ENCODE measurements at regions of chr19 and their contacts with region 1.

Region 1: DNA sequence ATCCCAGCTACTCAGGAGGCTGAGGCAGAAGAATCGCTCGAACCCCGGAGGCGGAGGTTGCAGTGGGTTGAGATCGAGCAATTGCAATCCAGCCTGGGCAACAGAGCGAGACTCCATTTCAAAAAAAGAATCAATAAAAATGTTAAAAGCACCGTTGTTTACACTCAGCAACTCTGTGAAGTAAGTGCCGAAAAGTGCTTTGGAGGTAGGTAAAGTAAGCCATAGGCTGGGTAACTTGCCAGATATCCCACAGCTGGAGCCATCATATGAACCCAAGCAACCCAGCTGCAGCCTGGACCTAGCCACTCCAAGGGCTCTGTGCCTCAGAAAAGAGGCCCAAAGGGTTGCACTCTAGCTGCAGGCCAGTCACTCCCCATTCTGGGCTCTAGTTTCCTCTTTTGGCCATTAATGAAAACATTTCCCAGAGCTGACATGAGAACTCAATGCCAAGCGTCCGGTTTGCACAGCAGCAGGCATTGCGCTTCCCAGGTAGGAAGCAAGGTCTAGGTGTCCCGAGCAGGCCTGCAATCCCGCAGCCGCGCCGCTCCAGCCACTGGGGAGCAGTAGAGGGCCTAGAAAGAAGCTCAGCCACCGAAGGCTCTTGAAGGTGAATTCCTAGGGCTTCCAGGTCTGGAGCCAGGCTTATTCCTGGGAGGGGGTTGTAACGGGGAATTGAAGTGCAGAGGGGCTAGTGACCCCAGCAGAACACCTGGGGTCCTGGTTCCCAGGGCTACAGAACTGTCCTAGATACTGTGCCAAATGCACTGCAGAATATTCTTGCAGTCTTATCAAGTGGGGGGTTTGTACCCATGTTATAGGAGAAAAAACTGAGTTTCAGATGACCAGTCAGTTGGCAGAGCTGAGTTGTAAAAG is 4.1 kb upstream of the CD79A start:
- DNase-seq: peak; percentile 52 to 82 (median 82)
- ATAC-seq: peak; percentile 42 to 53
- H3K4me3 ChIP-seq: no peak overlapping the region
- H3K27ac ChIP-seq: no peak overlapping the region
- H3K4me1 ChIP-seq: peaks cover 3% of the 10 kb centered on the region
- H3K27me3 ChIP-seq: no peaks in the 10 kb centered on the region

Region 2: GRCh38 chr19:41934849-41935374 is 61.9 kb after region 1 on chr19:
- intact Hi-C with region 1: loop called in 1 of 4 experiments (anchors 5 kb)
- DNase-seq: peak; percentile 59 to 81 (median 78)
- ATAC-seq: peak; percentile 57 to 63
- H3K4me3 ChIP-seq: no peak overlapping the region
- H3K27ac ChIP-seq: no peak overlapping the region
- H3K4me1 ChIP-seq: no peaks in the 10 kb centered on the region
- H3K27me3 ChIP-seq: no peaks in the 10 kb centered on the region

Region 3: DNA sequence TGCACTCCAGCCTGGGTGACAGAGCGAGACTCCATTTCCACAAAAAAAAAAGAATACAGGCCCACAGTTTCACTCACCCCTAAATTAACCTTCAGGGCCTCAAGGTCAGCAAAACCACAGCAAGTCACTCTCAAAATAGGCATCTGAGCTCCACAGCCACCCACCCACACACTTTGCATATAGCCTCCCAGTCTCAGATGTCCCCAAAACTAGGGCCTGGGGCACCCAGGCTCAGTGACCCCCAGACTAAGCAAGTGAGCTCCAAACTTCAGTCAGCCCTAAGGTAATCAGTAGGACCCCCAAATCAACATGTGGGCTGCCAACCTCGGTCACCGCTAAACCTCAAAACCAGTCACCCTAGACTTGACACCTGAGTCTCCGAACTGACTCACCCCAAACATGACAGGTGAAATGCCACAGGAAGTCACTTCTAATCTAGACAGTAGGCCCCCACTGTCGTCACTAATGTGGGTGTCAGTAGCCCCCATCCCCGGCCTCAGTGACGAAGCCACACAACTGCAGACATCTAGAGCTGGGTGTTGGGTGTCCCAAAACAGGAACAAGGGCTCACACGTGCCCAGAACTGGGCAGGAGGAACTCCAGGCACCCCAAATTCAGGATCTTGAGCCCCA is 72.2 kb after region 1 on chr19:
- intact Hi-C with region 1: loop called in 3 of 4 experiments (anchors 5 kb)
- DNase-seq: peak in 2 of 3 donors; percentile 23 to 61
- ATAC-seq: no peak
- H3K4me3 ChIP-seq: no peak overlapping the region
- H3K27ac ChIP-seq: no peak overlapping the region
- H3K4me1 ChIP-seq: no peaks in the 10 kb centered on the region
- H3K27me3 ChIP-seq: no peaks in the 10 kb centered on the region

Region 4: DNA sequence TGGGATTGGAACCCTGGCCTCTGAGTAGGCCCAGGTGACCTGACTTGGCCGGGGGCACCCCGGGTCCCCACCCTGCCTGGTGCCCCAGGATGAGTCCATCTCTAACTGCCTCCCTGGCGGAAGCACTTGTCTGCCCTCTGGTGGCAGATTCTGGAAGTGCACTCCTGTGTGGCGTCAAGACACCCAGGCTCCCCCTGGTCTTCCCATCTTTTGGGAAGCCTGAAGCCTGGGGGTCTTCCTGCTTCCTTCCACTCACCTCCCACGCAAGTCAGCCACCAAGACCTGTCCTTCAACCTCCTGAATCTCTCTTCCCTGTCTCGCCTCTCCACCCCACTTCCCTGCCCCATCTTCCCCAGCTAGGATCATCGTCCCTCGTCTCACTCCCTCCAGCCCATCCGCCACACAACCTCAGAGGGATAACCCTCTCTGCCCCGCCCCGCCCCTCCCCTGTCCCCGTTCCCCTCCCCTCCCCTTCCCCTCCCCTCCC is 78.7 kb after region 1 on chr19:
- intact Hi-C with region 1: loop called in 3 of 4 experiments (anchors 5 kb)
- DNase-seq: peak; percentile 76 to 90 (median 90)
- ATAC-seq: peak; percentile 56 to 71
- H3K4me3 ChIP-seq: no peak overlapping the region
- H3K27ac ChIP-seq: no peak overlapping the region
- H3K4me1 ChIP-seq: no peaks in the 10 kb centered on the region
- H3K27me3 ChIP-seq: no peaks in the 10 kb centered on the region